ENCODE measurements at regions of chr2 and their contacts with region 1.

Region 1: GRCh38 chr2:6499691-6500090 is 366.0 kb downstream of the CMPK2 start:
- DNase-seq: no peak
- ATAC-seq: no peak
- H3K4me3 ChIP-seq: no peak overlapping the region
- H3K27ac ChIP-seq: no peak overlapping the region
- H3K4me1 ChIP-seq: no peaks in the 10 kb centered on the region; the same call in 1 of the 2 replicates
- H3K27me3 ChIP-seq: no peaks in the 10 kb centered on the region
- CTCF ChIP-seq: no peak
- POLR2A ChIP-seq: no peak
- RAD21 ChIP-seq: no peak

Region 2: DNA sequence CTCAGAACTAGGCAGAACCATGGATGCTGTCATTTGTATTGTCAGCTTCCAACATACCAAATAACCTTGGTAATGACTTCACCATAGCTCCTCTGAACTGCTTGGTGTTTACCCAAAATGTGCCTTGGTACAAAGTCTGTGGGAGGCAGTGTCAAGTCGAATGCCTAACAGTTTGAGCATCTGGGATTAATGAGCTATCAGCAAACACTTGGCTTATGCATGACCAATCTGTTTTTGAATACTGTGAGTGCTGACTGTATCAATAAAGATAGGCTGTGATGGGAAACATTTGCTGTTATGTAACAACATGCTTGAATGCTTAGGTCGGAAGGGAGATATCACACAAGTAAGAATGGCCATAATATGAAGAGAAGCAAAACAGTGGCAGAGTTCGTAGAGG is 89.4 kb before region 1 on chr2:
- CTCF ChIA-PET with region 1: no interaction called
- POLR2A ChIA-PET with region 1: no interaction called
- dilution Hi-C with region 1: no loop called
- in situ Hi-C with region 1: no loop called
- intact Hi-C with region 1: no loop called
- DNase-seq: peak; percentile 6
- ATAC-seq: peak; percentile 24; the same call in 1 of the 2 replicates
- H3K4me3 ChIP-seq: no peak overlapping the region
- H3K27ac ChIP-seq: no peak overlapping the region
- H3K4me1 ChIP-seq: peaks cover 1% of the 10 kb centered on the region; the same call in 1 of the 2 replicates
- H3K27me3 ChIP-seq: no peaks in the 10 kb centered on the region
- CTCF ChIP-seq: no peak
- POLR2A ChIP-seq: no peak
- RAD21 ChIP-seq: no peak

Region 3: GRCh38 chr2:6475155-6475940 is 24.3 kb before region 1 on chr2:
- CTCF ChIA-PET with region 1: interaction called, 12 read pairs
- POLR2A ChIA-PET with region 1: no interaction called
- dilution Hi-C with region 1: no loop called
- in situ Hi-C with region 1: no loop called
- intact Hi-C with region 1: no loop called
- DNase-seq: no peak
- ATAC-seq: no peak
- H3K4me3 ChIP-seq: no peak overlapping the region
- H3K27ac ChIP-seq: no peak overlapping the region
- H3K4me1 ChIP-seq: no peaks in the 10 kb centered on the region
- H3K27me3 ChIP-seq: no peaks in the 10 kb centered on the region
- CTCF ChIP-seq: no peak
- POLR2A ChIP-seq: no peak
- RAD21 ChIP-seq: no peak

Region 4: GRCh38 chr2:6723865-6724604 is 224.3 kb after region 1 on chr2:
- CTCF ChIA-PET with region 1: no interaction called
- POLR2A ChIA-PET with region 1: no interaction called
- dilution Hi-C with region 1: no loop called
- in situ Hi-C with region 1: no loop called
- intact Hi-C with region 1: no loop called
- DNase-seq: no peak
- ATAC-seq: no peak
- H3K4me3 ChIP-seq: no peak overlapping the region
- H3K27ac ChIP-seq: no peak overlapping the region
- H3K4me1 ChIP-seq: no peaks in the 10 kb centered on the region
- H3K27me3 ChIP-seq: no peaks in the 10 kb centered on the region
- CTCF ChIP-seq: no peak
- POLR2A ChIP-seq: no peak
- RAD21 ChIP-seq: no peak

Region 5: GRCh38 chr2:7014174-7014640 is 514.5 kb after region 1 on chr2:
- CTCF ChIA-PET with region 1: no interaction called
- POLR2A ChIA-PET with region 1: no interaction called
- dilution Hi-C with region 1: no loop called
- in situ Hi-C with region 1: no loop called
- intact Hi-C with region 1: no loop called
- DNase-seq: no peak
- ATAC-seq: no peak
- H3K4me3 ChIP-seq: no peak overlapping the region
- H3K27ac ChIP-seq: no peak overlapping the region
- H3K4me1 ChIP-seq: no peaks in the 10 kb centered on the region
- H3K27me3 ChIP-seq: no peaks in the 10 kb centered on the region
- CTCF ChIP-seq: no peak
- POLR2A ChIP-seq: no peak
- RAD21 ChIP-seq: no peak

Measured in IMR-90 (cell line).